Natural killer cell (primary cell): ENCODE measurements at regions of chr11 and their contacts with region 1.

Region 1: DNA sequence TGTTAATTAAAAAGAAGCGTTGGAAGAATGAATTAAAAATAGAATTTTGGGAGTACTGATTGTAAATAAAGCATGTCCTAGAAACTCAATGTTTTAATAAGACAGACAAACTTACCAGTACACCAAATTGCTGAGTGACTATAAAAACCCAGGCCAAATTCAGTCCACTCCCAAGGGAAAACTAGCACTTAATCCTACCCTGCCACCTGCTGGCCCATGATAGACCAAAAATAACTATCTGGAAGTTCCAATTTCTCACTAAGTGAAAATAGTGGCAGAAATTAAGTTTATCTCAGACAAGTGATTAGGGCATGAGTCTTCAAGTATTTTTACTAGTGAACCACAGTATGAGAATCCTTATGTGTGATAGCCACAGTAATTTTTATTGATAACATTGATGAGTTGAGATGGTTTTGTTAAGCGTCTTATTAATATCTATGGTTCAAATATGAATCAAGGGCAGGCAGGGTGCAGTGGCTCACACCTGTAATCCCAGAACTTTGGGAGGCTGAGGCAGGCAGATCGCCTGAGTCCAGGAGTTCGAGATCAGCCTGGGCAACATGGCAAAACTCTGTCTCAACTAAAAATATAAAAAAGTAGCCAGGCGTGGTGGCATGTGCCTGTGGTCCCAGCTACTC is 9.8 kb upstream of the DDX10 start:
- DNase-seq: peak in 1 of 2 donors; percentile 54
- ATAC-seq: no peak
- H3K4me3 ChIP-seq: no peak overlapping the region
- H3K4me3 Mint-ChIP-seq: no peak overlapping the region
- H3K27ac ChIP-seq: no peak overlapping the region
- H3K27ac Mint-ChIP-seq: no peak overlapping the region
- H3K4me1 ChIP-seq: no peaks in the 10 kb centered on the region
- H3K4me1 Mint-ChIP-seq: no peaks in the 10 kb centered on the region
- H3K27me3 ChIP-seq: no peaks in the 10 kb centered on the region
- H3K27me3 Mint-ChIP-seq: peaks cover 5 to 19% of the 10 kb centered on the region in 2 donors
- CTCF ChIP-seq: no peak

Region 2: DNA sequence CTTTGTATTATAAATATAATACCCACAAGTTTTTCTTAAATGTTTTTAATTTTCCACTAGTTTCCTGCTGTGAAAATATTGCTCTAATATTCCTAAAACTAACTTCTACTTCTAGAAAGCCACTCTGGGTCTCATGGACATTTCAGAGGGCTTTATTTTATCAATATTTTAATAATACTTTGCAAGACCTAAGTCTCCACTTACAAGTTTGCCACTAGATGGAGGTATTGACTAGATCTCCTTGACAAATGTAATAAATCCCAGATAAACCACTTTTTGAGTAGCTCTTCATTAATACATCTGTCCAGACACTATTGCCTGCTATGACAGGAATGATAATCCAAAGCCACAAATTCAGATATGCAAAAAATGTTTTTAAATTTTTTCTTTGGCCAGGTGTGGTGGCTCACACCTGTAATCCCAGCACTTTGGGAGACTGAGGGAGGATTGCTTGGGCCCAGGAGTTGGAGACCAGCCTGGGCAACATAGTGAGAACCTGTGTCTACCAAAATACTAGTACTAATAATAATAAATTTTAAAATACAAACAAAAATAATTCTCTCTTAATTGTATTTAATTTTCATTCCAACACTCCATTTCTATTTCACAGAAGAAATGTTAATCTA is 537.3 kb before region 1 on chr11:
- intact Hi-C with region 1: loop called (anchors 10 kb)
- DNase-seq: peak in 1 of 2 donors; percentile 58
- ATAC-seq: no peak
- H3K4me3 ChIP-seq: no peak overlapping the region
- H3K4me3 Mint-ChIP-seq: no peak overlapping the region
- H3K27ac ChIP-seq: no peak overlapping the region
- H3K27ac Mint-ChIP-seq: no peak overlapping the region
- H3K4me1 ChIP-seq: peaks cover 13% of the 10 kb centered on the region
- H3K4me1 Mint-ChIP-seq: peaks cover 11 to 13% of the 10 kb centered on the region in 2 donors
- H3K27me3 ChIP-seq: no peaks in the 10 kb centered on the region
- H3K27me3 Mint-ChIP-seq: no peaks in the 10 kb centered on the region
- CTCF ChIP-seq: peak; percentile 19

Region 3: GRCh38 chr11:108494182-108494581 is 160.9 kb before region 1 on chr11:
- intact Hi-C with region 1: no loop called
- DNase-seq: no peak
- ATAC-seq: no peak
- H3K4me3 ChIP-seq: no peak overlapping the region
- H3K4me3 Mint-ChIP-seq: no peak overlapping the region
- H3K27ac ChIP-seq: no peak overlapping the region
- H3K27ac Mint-ChIP-seq: peak overlapping the region in 1 of 2 donors; percentile 85
- H3K4me1 ChIP-seq: peaks cover 16% of the 10 kb centered on the region
- H3K4me1 Mint-ChIP-seq: peaks cover 22 to 25% of the 10 kb centered on the region in 2 donors
- H3K27me3 ChIP-seq: no peaks in the 10 kb centered on the region
- H3K27me3 Mint-ChIP-seq: no peaks in the 10 kb centered on the region
- CTCF ChIP-seq: no peak

Region 4: DNA sequence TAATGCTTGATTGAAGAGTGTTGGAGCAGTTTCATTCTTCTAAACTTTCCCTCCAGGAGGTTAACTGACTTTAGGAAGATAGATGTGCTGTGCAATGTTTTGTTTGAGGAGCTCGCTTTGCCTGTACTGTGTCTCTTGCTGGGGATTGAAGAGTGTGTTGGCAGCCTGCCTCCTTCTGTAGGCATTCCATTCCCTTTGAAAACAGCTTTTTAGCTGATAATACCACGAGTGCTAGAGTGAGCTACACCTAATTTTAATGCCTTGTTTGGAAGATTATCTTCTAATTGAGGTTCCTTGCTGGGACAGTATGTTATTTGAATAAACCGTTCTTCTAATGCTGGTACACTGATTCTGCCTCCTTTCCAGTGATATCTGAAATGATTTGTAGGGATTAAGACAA is 17.0 kb after region 1 on chr11:
- intact Hi-C with region 1: no loop called
- DNase-seq: no peak
- ATAC-seq: no peak
- H3K4me3 ChIP-seq: no peak overlapping the region
- H3K4me3 Mint-ChIP-seq: no peak overlapping the region
- H3K27ac ChIP-seq: no peak overlapping the region
- H3K27ac Mint-ChIP-seq: no peak overlapping the region
- H3K4me1 ChIP-seq: no peaks in the 10 kb centered on the region
- H3K4me1 Mint-ChIP-seq: peaks cover 22 to 37% of the 10 kb centered on the region in 2 donors
- H3K27me3 ChIP-seq: no peaks in the 10 kb centered on the region
- H3K27me3 Mint-ChIP-seq: no peaks in the 10 kb centered on the region
- CTCF ChIP-seq: no peak

Region 5: GRCh38 chr11:108685419-108686130 is 30.5 kb after region 1 on chr11:
- intact Hi-C with region 1: no loop called
- DNase-seq: no peak
- ATAC-seq: no peak
- H3K4me3 ChIP-seq: no peak overlapping the region
- H3K4me3 Mint-ChIP-seq: no peak overlapping the region
- H3K27ac ChIP-seq: no peak overlapping the region
- H3K27ac Mint-ChIP-seq: no peak overlapping the region
- H3K4me1 ChIP-seq: no peaks in the 10 kb centered on the region
- H3K4me1 Mint-ChIP-seq: peaks cover 4 to 6% of the 10 kb centered on the region in 2 donors
- H3K27me3 ChIP-seq: no peaks in the 10 kb centered on the region
- H3K27me3 Mint-ChIP-seq: no peaks in the 10 kb centered on the region
- CTCF ChIP-seq: no peak

Region 6: DNA sequence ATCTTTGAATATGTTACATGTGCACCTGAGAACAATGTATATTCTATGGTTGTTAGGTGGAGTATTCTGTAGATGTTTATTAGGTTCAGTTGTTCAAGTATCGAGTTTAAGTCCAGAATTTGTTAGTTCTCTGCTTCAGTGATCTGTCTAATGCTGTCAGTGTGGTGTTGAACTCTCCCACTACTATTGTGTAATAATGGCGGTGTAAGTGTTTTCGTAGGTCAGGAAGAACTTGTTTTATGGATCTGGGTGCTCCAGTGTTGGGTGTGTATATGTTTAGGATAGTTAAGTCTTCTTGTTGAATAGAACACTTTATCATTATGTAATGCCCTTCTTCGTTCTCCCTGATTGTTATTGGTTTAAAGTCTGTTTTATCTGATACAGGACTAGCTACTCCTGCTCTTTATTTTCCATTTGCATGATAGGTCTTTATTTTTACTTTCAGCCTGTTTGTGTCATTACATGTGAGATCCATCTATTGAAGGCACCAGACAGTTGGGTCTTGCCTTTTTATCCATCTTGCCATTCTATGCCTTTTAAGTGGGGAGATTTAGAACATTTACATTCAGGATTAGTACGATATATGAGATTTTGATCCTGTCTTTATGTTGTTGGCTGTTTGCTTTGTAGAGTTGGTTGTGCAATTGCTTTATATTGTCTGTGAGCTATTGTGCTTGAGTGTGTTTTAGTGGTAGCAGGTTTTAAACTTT is 131.3 kb after region 1 on chr11:
- intact Hi-C with region 1: no loop called
- DNase-seq: no peak
- ATAC-seq: no peak
- H3K4me3 ChIP-seq: no peak overlapping the region
- H3K4me3 Mint-ChIP-seq: no peak overlapping the region
- H3K27ac ChIP-seq: no peak overlapping the region
- H3K27ac Mint-ChIP-seq: no peak overlapping the region
- H3K4me1 ChIP-seq: no peaks in the 10 kb centered on the region
- H3K4me1 Mint-ChIP-seq: peaks cover 48 to 56% of the 10 kb centered on the region in 2 donors
- H3K27me3 ChIP-seq: no peaks in the 10 kb centered on the region
- H3K27me3 Mint-ChIP-seq: no peaks in the 10 kb centered on the region
- CTCF ChIP-seq: no peak